Caco-2 (cell line): ENCODE measurements at regions of chr19 and their contacts with region 1.

Region 1: DNA sequence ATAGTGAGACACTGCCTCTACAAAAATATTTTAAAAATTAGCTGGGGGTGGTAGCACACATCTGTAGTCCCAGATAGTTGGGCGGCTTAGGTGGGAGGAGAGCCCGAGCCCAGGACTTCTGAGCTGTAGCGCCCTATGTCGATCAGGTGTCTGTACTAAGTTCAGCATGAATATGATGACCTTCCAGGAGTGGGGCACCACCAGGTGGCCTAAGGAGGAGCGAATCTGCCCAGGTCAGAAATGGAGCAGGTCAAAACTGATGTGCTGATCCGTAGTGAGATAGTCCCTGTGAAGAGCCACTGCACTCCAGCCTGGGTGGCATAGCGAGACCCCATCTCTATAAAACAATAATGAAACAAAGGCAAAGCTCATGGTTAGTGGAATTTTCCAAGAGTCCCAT is 50.8 kb downstream of the SMARCA4 start:
- DNase-seq: peak in 1 of 2 experiments; percentile 23
- H3K4me3 ChIP-seq: no peak overlapping the region
- H3K4me3 Mint-ChIP-seq: no peak overlapping the region
- H3K27ac Mint-ChIP-seq: no peak overlapping the region
- H3K4me1 ChIP-seq: no peaks in the 10 kb centered on the region
- H3K4me1 Mint-ChIP-seq: no peaks in the 10 kb centered on the region
- H3K27me3 ChIP-seq: no peaks in the 10 kb centered on the region
- H3K27me3 Mint-ChIP-seq: no peaks in the 10 kb centered on the region
- CTCF ChIP-seq: peak in 1 of 2 experiments; percentile 18

Region 2: DNA sequence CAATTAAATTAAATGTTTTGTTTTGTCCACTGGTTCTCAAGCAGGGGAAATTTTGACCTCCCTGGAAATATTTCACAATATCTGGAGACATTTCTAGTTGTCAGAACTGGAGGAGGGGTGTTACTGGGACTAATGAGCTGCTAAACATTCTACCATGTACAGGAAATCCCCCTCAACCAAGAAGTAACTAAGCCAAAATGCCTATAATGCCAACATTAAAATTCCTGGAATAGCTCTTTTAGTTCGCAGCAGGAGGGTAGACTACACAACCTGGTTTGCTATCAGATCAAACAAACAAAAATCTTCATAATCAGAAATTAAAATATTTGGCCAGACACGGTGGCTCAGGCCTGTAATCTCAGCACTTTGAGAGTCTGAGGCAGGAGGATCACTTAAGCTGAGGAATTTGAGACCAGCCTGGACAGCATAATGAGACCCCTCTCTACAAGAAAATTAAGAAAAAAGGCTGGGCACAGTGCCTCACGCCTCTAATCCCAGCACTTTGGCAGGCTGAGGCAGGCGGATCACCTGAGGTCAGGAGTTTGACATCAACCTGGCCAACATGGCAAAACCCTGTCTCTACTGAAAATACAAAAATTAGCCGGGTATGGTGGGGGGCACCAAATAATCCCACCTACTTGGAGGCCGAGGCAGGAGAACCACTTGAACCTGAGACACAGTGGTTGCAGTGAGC is 64.6 kb before region 1 on chr19:
- CTCF ChIA-PET with region 1: interaction called, 5 read pairs
- POLR2A ChIA-PET with region 1: no interaction called
- intact Hi-C with region 1: loop called (anchors 2 kb)
- DNase-seq: no peak
- H3K4me3 ChIP-seq: no peak overlapping the region
- H3K4me3 Mint-ChIP-seq: no peak overlapping the region
- H3K27ac Mint-ChIP-seq: no peak overlapping the region
- H3K4me1 ChIP-seq: peaks cover 6% of the 10 kb centered on the region
- H3K4me1 Mint-ChIP-seq: no peaks in the 10 kb centered on the region
- H3K27me3 ChIP-seq: no peaks in the 10 kb centered on the region
- H3K27me3 Mint-ChIP-seq: no peaks in the 10 kb centered on the region
- CTCF ChIP-seq: no peak

Region 3: GRCh38 chr19:10986261-10987127 is 25.2 kb before region 1 on chr19:
- CTCF ChIA-PET with region 1: no interaction called
- POLR2A ChIA-PET with region 1: no interaction called
- intact Hi-C with region 1: no loop called
- DNase-seq: no peak
- H3K4me3 ChIP-seq: no peak overlapping the region
- H3K4me3 Mint-ChIP-seq: no peak overlapping the region
- H3K27ac Mint-ChIP-seq: no peak overlapping the region
- H3K4me1 ChIP-seq: no peaks in the 10 kb centered on the region
- H3K4me1 Mint-ChIP-seq: no peaks in the 10 kb centered on the region
- H3K27me3 ChIP-seq: no peaks in the 10 kb centered on the region
- H3K27me3 Mint-ChIP-seq: no peaks in the 10 kb centered on the region
- CTCF ChIP-seq: no peak

Region 4: GRCh38 chr19:11025445-11025844 is 13.8 kb after region 1 on chr19:
- CTCF ChIA-PET with region 1: no interaction called
- POLR2A ChIA-PET with region 1: no interaction called
- intact Hi-C with region 1: no loop called
- DNase-seq: no peak
- H3K4me3 ChIP-seq: no peak overlapping the region
- H3K4me3 Mint-ChIP-seq: no peak overlapping the region
- H3K27ac Mint-ChIP-seq: no peak overlapping the region
- H3K4me1 ChIP-seq: no peaks in the 10 kb centered on the region
- H3K4me1 Mint-ChIP-seq: no peaks in the 10 kb centered on the region
- H3K27me3 ChIP-seq: no peaks in the 10 kb centered on the region
- H3K27me3 Mint-ChIP-seq: no peaks in the 10 kb centered on the region
- CTCF ChIP-seq: no peak